ENCODE measurements at regions of chr7 and their contacts with region 1.

Region 1: GRCh38 chr7:31744294-31744874 is 57.4 kb downstream of the PPP1R17 start:
- DNase-seq: peak; percentile 71
- H3K4me3 Mint-ChIP-seq: no peak overlapping the region
- H3K27ac Mint-ChIP-seq: no peak overlapping the region
- H3K4me1 Mint-ChIP-seq: no peaks in the 10 kb centered on the region
- H3K27me3 Mint-ChIP-seq: peaks cover 14% of the 10 kb centered on the region

Region 2: DNA sequence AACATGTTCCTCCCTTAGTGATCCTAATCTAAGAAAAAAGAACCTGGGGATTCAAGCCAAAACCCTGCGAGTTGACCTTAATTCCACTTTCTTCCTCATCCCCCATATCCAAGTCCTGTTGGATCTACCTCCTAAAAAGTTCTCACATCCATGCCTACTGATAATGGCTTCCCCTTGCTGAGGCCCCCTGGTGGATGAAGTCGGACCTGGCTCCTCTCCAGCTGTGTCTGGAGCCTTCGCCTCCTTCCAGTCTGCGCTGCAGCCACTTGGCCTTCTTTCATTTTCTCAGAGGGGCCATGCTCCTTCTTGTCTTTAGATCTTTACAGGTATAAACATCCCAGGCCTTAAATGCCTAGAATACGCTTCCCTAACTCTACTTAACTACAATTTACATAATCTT is 317.8 kb after region 1 on chr7:
- CTCF ChIA-PET with region 1: no interaction called
- intact Hi-C with region 1: loop called (anchors 1 kb)
- DNase-seq: peak; percentile 34
- H3K4me3 Mint-ChIP-seq: no peak overlapping the region
- H3K27ac Mint-ChIP-seq: no peak overlapping the region
- H3K4me1 Mint-ChIP-seq: no peaks in the 10 kb centered on the region
- H3K27me3 Mint-ChIP-seq: no peaks in the 10 kb centered on the region

Region 3: GRCh38 chr7:32204361-32205018 is 460.1 kb after region 1 on chr7:
- CTCF ChIA-PET with region 1: no interaction called
- intact Hi-C with region 1: loop called (anchors 1 kb)
- DNase-seq: peak; percentile 25
- H3K4me3 Mint-ChIP-seq: no peak overlapping the region
- H3K27ac Mint-ChIP-seq: no peak overlapping the region
- H3K4me1 Mint-ChIP-seq: no peaks in the 10 kb centered on the region
- H3K27me3 Mint-ChIP-seq: peaks cover 9% of the 10 kb centered on the region

Region 4: GRCh38 chr7:32347244-32347828 is 603.0 kb after region 1 on chr7:
- CTCF ChIA-PET with region 1: no interaction called
- intact Hi-C with region 1: loop called (anchors 2 kb)
- DNase-seq: peak; percentile 52
- H3K4me3 Mint-ChIP-seq: no peak overlapping the region
- H3K27ac Mint-ChIP-seq: no peak overlapping the region
- H3K4me1 Mint-ChIP-seq: no peaks in the 10 kb centered on the region
- H3K27me3 Mint-ChIP-seq: peaks cover 3% of the 10 kb centered on the region

Region 5: DNA sequence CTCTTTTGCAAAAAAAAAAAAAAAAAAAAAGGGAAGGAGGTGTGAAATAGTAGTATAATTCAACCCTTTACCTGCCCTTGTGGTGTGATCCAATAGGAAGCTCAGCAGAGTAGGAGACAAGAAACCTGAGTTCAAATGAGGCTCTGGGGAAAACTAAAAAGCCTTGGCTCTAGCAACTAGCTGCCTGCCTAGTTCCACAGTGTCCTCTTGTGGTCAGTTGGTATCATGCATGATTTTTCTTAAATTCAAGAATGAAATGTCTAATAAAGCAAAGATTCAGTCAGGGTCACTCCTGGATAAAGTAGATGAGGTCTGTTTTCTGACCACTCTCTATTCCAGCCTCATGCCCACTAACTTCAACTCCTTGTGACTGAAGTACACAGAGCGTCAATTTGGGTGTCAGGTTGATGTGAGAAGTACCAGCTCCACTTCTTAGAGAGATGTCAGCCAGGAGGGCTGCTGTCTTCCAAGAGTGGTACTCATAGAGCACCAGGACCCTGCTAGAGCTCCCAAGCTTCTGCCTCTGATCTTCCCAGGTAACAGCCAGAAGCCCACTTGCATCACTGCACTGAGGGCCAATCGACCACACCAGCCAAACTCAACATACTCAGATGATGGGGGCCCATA is 735.3 kb after region 1 on chr7:
- CTCF ChIA-PET with region 1: no interaction called
- intact Hi-C with region 1: loop called (anchors 1 kb)
- DNase-seq: peak; percentile 58
- H3K4me3 Mint-ChIP-seq: no peak overlapping the region
- H3K27ac Mint-ChIP-seq: no peak overlapping the region
- H3K4me1 Mint-ChIP-seq: peaks cover 6% of the 10 kb centered on the region
- H3K27me3 Mint-ChIP-seq: no peaks in the 10 kb centered on the region